Calu3 (cell line): ENCODE measurements at regions of chr6 and their contacts with region 1.

Region 1: DNA sequence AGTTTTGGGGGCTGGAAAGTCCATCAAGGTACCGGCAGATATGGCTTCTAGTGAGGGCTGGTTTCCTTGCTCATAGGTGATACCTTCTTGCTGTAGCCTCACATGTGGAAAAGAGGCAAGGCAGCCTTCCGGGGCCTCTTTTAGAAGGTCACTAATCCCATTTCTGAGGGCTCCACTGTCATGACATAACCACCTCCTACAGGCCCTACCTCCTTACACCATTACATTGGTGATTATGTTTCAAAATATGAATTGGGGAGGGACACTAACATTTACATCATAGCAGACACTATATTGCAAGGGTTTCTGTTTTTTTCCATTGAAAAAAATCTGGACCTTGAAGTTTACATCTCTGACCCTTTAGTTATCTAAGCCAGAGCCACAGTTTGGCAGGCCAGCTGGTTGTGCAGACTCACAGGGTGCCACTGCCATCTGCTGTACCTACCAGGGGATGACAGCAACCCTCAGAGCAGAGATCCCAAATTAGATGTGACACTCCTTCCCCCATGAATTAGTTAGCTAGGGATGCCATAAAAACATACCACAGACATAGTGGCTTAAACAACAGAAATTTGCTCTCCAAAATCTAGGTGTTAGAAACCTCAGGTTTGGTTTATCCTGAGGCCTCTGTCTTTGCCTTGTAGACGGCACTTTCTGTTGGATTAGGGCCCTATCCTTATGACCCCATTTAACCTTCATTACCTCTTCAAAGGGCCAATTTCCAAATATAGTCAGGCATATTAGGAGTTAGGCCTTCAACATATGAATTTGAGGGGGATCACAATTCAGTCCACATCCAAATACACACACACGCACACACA is 166.4 kb upstream of the RNF217 start:
- DNase-seq: peak; percentile 19
- H3K4me3 Mint-ChIP-seq: no peak overlapping the region
- H3K27ac Mint-ChIP-seq: no peak overlapping the region
- H3K4me1 Mint-ChIP-seq: peaks cover 16% of the 10 kb centered on the region
- H3K27me3 Mint-ChIP-seq: no peaks in the 10 kb centered on the region
- CTCF ChIP-seq: peak; percentile 47

Region 2: GRCh38 chr6:123777563-123777962 is 1018.3 kb before region 1 on chr6:
- CTCF ChIA-PET with region 1: interaction called, 4 read pairs
- intact Hi-C with region 1: loop called (anchors 1 kb)
- DNase-seq: no peak
- H3K4me3 Mint-ChIP-seq: no peak overlapping the region
- H3K27ac Mint-ChIP-seq: no peak overlapping the region
- H3K4me1 Mint-ChIP-seq: no peaks in the 10 kb centered on the region
- H3K27me3 Mint-ChIP-seq: no peaks in the 10 kb centered on the region
- CTCF ChIP-seq: no peak

Region 3: DNA sequence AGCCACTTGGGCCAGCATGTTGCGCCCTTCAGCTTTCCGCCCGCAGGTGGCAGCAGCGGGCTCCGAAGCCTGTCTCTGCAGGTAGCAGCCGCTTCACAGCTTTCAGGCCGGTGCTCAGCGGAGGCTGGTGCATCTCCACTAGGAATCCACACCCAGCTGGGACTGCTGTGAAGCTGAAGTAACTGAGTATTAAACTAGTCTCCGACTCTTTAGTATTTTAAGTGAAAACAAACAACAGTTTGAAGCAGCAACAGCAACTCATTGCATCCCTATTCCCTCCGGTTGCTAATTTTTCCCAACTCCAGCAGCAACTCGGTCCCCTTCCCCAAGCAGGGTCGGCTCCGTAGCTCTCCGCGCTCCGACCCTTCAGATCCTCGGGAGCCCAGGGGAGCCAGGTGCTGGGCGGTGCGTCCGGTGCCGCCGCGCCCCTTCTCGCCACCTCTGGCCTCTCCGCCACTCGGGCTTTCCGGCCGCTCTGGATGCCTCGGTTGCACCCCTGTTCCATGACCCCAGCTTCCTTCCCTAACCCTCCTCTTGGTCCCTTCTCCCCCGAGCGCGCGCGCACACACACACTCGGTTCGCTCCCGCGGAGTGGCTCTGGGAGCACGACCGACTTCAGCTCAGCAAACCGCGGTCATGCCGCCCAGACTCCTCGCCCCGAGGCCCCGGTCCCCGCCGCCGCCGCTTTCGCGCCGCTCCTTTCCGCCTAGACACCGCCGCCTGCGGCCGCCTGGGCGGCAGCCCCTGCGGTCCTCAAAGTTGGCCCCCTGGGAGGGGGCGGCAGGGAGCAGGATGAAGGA is 993.0 kb before region 1 on chr6:
- CTCF ChIA-PET with region 1: interaction called, 4 read pairs
- intact Hi-C with region 1: loop called (anchors 2 kb)
- DNase-seq: peak; percentile 82
- H3K4me3 Mint-ChIP-seq: peak overlapping the region; percentile 78
- H3K27ac Mint-ChIP-seq: no peak overlapping the region
- H3K4me1 Mint-ChIP-seq: no peaks in the 10 kb centered on the region
- H3K27me3 Mint-ChIP-seq: peaks cover 16% of the 10 kb centered on the region
- CTCF ChIP-seq: peak; percentile 64

Region 4: DNA sequence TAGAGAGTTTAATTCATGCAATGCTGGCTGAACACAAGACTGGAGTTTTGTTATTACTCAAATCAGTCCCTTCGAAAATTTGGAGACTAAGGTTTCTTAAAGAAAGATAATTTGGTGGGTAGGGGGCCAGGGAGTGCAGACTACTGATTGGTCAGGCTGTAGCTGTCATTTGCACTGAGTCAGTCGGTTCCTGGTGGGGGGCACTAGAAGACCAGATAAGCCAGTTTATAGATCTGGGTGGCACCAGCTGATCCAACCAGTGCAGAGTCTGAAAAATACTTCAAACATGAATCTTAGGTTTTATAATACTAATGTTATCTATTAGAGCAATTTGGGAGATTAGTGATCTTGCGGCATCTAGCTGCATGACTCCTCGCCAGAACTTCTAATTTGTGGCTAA is 461.5 kb before region 1 on chr6:
- CTCF ChIA-PET with region 1: no interaction called
- intact Hi-C with region 1: loop called (anchors 5 kb)
- DNase-seq: peak; percentile 17
- H3K4me3 Mint-ChIP-seq: no peak overlapping the region
- H3K27ac Mint-ChIP-seq: no peak overlapping the region
- H3K4me1 Mint-ChIP-seq: no peaks in the 10 kb centered on the region
- H3K27me3 Mint-ChIP-seq: no peaks in the 10 kb centered on the region
- CTCF ChIP-seq: no peak

Region 5: GRCh38 chr6:124393536-124393935 is 402.3 kb before region 1 on chr6:
- CTCF ChIA-PET with region 1: no interaction called
- intact Hi-C with region 1: loop called (anchors 10 kb)
- DNase-seq: no peak
- H3K4me3 Mint-ChIP-seq: no peak overlapping the region
- H3K27ac Mint-ChIP-seq: no peak overlapping the region
- H3K4me1 Mint-ChIP-seq: no peaks in the 10 kb centered on the region
- H3K27me3 Mint-ChIP-seq: no peaks in the 10 kb centered on the region
- CTCF ChIP-seq: no peak